IMR-90 (cell line): ENCODE measurements at regions of chr20 and their contacts with region 1.

Region 1: GRCh38 chr20:51966291-51966971 is 164.1 kb upstream of the SALL4 start:
- DNase-seq: peak; percentile 63
- ATAC-seq: peak; percentile 90
- H3K4me3 ChIP-seq: no peak overlapping the region
- H3K27ac ChIP-seq: no peak overlapping the region
- H3K4me1 ChIP-seq: peaks cover 7% of the 10 kb centered on the region; the same call in 1 of the 2 replicates
- H3K27me3 ChIP-seq: no peaks in the 10 kb centered on the region
- CTCF ChIP-seq: peak; percentile 60
- POLR2A ChIP-seq: no peak
- RAD21 ChIP-seq: peak; percentile 56

Region 2: GRCh38 chr20:51650685-51651134 is 315.7 kb before region 1 on chr20:
- CTCF ChIA-PET with region 1: no interaction called
- POLR2A ChIA-PET with region 1: no interaction called
- dilution Hi-C with region 1: no loop called
- in situ Hi-C with region 1: no loop called
- intact Hi-C with region 1: no loop called
- DNase-seq: peak; percentile 78
- ATAC-seq: peak; percentile 69
- H3K4me3 ChIP-seq: no peak overlapping the region
- H3K27ac ChIP-seq: no peak overlapping the region
- H3K4me1 ChIP-seq: peaks cover 3% of the 10 kb centered on the region; the same call in 1 of the 2 replicates
- H3K27me3 ChIP-seq: no peaks in the 10 kb centered on the region
- CTCF ChIP-seq: no peak
- POLR2A ChIP-seq: no peak
- RAD21 ChIP-seq: no peak

Region 3: GRCh38 chr20:51742685-51743357 is 223.6 kb before region 1 on chr20:
- CTCF ChIA-PET with region 1: no interaction called
- POLR2A ChIA-PET with region 1: no interaction called
- dilution Hi-C with region 1: no loop called
- in situ Hi-C with region 1: no loop called
- intact Hi-C with region 1: no loop called
- DNase-seq: peak; percentile 57
- ATAC-seq: peak; percentile 82
- H3K4me3 ChIP-seq: no peak overlapping the region; the same call in 1 of the 2 replicates
- H3K27ac ChIP-seq: peak overlapping the region; percentile 61
- H3K4me1 ChIP-seq: peaks cover 10% of the 10 kb centered on the region
- H3K27me3 ChIP-seq: no peaks in the 10 kb centered on the region
- CTCF ChIP-seq: no peak
- POLR2A ChIP-seq: no peak
- RAD21 ChIP-seq: no peak

Region 4: GRCh38 chr20:51800060-51800794 is 166.2 kb before region 1 on chr20:
- CTCF ChIA-PET with region 1: no interaction called
- POLR2A ChIA-PET with region 1: no interaction called
- dilution Hi-C with region 1: no loop called
- in situ Hi-C with region 1: no loop called
- intact Hi-C with region 1: loop called (anchors 10 kb)
- DNase-seq: no peak
- ATAC-seq: peak; percentile 69
- H3K4me3 ChIP-seq: peak overlapping the region; percentile 40
- H3K27ac ChIP-seq: no peak overlapping the region
- H3K4me1 ChIP-seq: peaks cover 5% of the 10 kb centered on the region; the same call in 1 of the 2 replicates
- H3K27me3 ChIP-seq: peaks cover 25% of the 10 kb centered on the region
- CTCF ChIP-seq: peak; percentile 64
- POLR2A ChIP-seq: no peak
- RAD21 ChIP-seq: peak; percentile 58

Region 5: GRCh38 chr20:51938559-51939331 is 27.7 kb before region 1 on chr20:
- CTCF ChIA-PET with region 1: no interaction called
- POLR2A ChIA-PET with region 1: no interaction called
- dilution Hi-C with region 1: no loop called
- in situ Hi-C with region 1: no loop called
- intact Hi-C with region 1: no loop called
- DNase-seq: peak; percentile 19
- ATAC-seq: peak; percentile 72
- H3K4me3 ChIP-seq: no peak overlapping the region
- H3K27ac ChIP-seq: no peak overlapping the region
- H3K4me1 ChIP-seq: peaks cover 6% of the 10 kb centered on the region
- H3K27me3 ChIP-seq: no peaks in the 10 kb centered on the region; the same call in 1 of the 2 replicates
- CTCF ChIP-seq: no peak
- POLR2A ChIP-seq: no peak
- RAD21 ChIP-seq: no peak